HEK293T (cell line): ENCODE measurements at regions of chr2 and their contacts with region 1.

Region 1: GRCh38 chr2:96554293-96555145 is 18.0 kb downstream of the ARID5A start:
- DNase-seq: peak; percentile 82

Region 2: GRCh38 chr2:96477458-96477857 is 77.1 kb before region 1 on chr2:
- CTCF ChIA-PET with region 1: no interaction called
- POLR2A ChIA-PET with region 1: no interaction called
- DNase-seq: no peak

Region 3: GRCh38 chr2:96536445-96537065 is 18.0 kb before region 1 on chr2 and contains the start of gene ARID5A:
- CTCF ChIA-PET with region 1: interaction called, 13 read pairs
- POLR2A ChIA-PET with region 1: interaction called, 3 read pairs
- DNase-seq: peak; percentile 90